Uterus (tissue), 4 donors: ENCODE measurements at regions of chr6 and their contacts with region 1.

Region 1: DNA sequence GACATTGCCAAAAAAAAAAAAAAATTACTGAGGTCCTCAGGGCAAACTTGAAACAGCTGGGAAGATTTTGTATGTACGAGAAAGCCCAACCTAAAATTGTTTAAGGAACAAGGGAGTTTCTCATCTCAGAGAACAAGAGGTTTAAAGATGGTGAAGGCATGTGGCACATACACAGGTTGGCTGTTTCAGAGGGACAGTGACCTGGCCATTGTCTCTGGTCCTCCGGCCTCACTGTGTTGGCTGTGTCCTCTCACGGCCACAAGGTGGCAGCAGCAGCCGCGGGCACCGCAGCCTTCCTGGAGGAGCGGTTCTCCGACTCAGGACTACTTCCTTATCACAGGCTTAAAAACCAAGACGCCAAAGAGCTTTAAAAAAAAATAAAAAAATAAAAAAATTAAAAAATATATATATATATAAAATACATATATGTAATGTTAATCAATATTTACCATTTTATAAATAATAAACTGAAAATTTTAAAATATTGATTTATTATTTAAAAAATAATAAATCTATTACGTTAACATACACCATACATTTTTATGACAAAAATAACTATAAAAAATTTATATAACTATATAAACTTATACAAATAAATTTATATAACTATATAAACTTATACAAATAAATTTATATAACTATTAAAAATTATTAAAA is 52.8 kb downstream of the GTF2H5 start:
- DNase-seq: peak; percentile 70 to 81
- H3K4me3 ChIP-seq: no peak overlapping the region
- H3K27ac ChIP-seq: no peak overlapping the region
- H3K4me1 ChIP-seq: no peaks in the 10 kb centered on the region
- H3K27me3 ChIP-seq: no peaks in the 10 kb centered on the region
- CTCF ChIP-seq: peak; percentile 93 to 97 (median 94)
- POLR2A ChIP-seq: no peak

Region 2: DNA sequence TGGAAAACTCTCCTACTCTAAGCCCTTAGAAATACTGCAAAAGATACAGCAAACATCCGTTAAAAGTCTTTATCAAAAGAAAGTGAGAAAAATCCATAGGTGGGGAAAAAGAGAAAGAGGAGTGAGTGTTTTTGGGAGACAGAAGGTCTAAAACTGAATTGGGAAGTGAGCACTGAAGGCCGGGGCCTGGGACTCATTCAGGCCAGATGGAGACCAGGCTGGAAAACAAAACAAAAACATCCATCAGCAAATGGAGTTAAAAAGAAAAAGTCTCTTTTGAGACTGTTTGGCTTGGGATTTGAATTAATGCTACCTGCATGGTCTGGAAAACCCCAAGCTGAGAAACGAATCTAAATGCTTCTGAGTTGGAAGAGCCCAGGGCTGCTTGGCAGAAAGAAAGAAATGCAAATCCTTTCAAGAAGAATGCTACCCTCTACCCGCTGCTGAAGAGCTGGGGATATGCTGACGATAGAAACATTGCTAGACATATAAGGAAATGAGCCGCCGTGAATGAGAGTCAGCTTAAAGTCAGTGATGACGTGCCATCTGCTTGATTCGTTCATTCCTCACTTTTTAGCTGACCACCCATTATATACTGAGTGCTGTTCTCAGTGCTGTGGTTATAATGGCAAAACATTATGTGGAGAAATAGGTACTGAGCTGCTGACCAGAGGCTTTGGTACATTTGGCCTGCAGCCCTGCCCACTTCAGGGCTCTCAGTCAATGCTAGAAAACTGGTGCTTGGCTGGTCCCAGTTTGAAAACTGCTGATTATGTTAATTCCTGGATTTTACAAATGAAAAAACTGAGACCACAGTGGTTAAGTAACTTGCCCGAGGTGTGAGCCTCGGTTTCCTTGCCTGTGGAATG is 63.3 kb after region 1 on chr6:
- intact Hi-C with region 1: no loop called
- DNase-seq: peak in 1 of 2 donors; percentile 44
- H3K4me3 ChIP-seq: no peak overlapping the region
- H3K27ac ChIP-seq: peak overlapping the region; percentile 74 to 76
- H3K4me1 ChIP-seq: peaks cover 0 to 14% of the 10 kb centered on the region in 2 donors
- H3K27me3 ChIP-seq: no peaks in the 10 kb centered on the region
- CTCF ChIP-seq: no peak
- POLR2A ChIP-seq: peak in 1 of 2 donors; percentile 34

Region 3: GRCh38 chr6:158605266-158605878 is 384.5 kb after region 1 on chr6:
- intact Hi-C with region 1: loop called (anchors 10 kb)
- DNase-seq: peak; percentile 51 to 57
- H3K4me3 ChIP-seq: no peak overlapping the region
- H3K27ac ChIP-seq: no peak overlapping the region
- H3K4me1 ChIP-seq: no peaks in the 10 kb centered on the region
- H3K27me3 ChIP-seq: no peaks in the 10 kb centered on the region
- CTCF ChIP-seq: peak; percentile 54 to 76 (median 70)
- POLR2A ChIP-seq: no peak

Region 4: DNA sequence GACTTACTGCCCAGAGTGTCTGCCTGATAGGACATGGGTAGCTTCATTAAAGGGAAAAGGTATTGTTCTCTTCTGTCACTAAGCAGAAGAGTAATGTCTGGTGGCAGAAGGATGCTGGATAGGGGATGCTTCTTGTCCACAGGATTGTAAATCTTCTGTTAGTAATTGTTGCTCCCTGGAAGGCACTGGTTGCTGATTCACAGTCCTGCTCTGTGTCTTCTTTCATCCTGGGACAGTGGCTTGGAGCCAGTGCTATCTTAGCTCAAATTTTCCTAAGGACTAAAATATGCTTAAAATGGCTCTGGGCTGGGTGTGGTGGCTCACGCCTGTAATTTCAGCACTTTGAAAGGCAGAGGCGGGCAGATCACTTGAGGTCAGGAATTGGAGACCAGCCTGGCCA is 476.9 kb after region 1 on chr6:
- intact Hi-C with region 1: loop called (anchors 10 kb)
- DNase-seq: no peak
- H3K4me3 ChIP-seq: no peak overlapping the region
- H3K27ac ChIP-seq: no peak overlapping the region
- H3K4me1 ChIP-seq: no peaks in the 10 kb centered on the region
- H3K27me3 ChIP-seq: no peaks in the 10 kb centered on the region
- CTCF ChIP-seq: no peak
- POLR2A ChIP-seq: no peak